ENCODE measurements at regions of chr4 and their contacts with region 1.

Region 1: GRCh38 chr4:119041951-119042560 is 93.6 kb upstream of the MYOZ2 start:
- DNase-seq: no peak
- H3K4me3 ChIP-seq: no peak overlapping the region
- CTCF ChIP-seq: peak; percentile 52

Region 2: GRCh38 chr4:118888666-118889311 is 153.3 kb before region 1 on chr4 and contains the start of gene SYNPO2:
- CTCF ChIA-PET with region 1: no interaction called
- POLR2A ChIA-PET with region 1: no interaction called
- DNase-seq: no peak
- H3K4me3 ChIP-seq: peak within 1 kb of the TSS; percentile 74
- CTCF ChIP-seq: no peak

Region 3: DNA sequence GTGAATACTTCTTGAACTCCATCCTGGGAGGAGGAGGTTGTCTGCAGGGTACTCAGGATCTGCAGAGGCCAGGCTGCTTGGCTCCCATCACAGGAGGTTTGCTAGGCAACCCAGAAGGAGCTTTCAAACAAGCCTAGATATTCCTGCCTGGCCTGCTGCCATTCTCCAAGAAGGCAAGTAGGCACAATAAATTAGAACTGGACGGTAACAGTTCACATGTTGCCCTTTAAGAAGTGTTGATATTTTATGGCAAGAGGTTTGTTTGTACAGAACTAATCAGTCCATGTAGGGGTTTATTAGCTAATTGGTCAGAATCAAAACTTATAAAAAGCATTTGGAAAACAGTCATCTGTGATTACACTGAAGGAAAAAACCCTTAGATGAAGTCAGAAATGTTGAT is 114.1 kb before region 1 on chr4:
- CTCF ChIA-PET with region 1: no interaction called
- POLR2A ChIA-PET with region 1: no interaction called
- DNase-seq: no peak
- H3K4me3 ChIP-seq: no peak overlapping the region
- CTCF ChIP-seq: no peak

Region 4: DNA sequence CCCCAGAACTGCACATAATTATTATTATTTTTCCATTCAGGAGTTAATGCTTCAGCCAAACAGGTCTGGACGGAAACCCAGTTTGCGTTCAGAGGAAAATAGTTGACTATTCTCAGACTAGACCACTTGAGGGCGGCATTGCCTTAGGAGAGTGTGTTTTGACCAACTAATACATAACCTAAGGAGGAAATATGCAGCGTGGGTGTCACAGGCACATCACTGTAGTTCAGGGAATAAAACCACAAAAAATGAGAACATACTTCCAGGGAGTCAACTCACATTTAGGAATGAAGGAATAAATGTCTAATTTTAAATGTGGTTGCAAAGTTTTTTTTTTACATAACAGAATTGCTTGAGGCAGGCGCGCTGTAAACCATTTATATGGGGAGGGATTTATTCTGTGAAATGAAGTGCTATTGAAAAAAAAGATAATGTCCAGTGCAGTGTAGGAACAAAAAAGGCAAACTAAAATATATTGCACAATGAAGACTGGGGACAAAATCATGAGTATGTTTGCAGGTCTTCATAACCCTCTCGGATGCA is 60.1 kb before region 1 on chr4:
- CTCF ChIA-PET with region 1: interaction called, 125 read pairs
- POLR2A ChIA-PET with region 1: interaction called, 5 read pairs
- DNase-seq: peak; percentile 96
- H3K4me3 ChIP-seq: no peak overlapping the region
- CTCF ChIP-seq: peak; percentile 59

Region 5: DNA sequence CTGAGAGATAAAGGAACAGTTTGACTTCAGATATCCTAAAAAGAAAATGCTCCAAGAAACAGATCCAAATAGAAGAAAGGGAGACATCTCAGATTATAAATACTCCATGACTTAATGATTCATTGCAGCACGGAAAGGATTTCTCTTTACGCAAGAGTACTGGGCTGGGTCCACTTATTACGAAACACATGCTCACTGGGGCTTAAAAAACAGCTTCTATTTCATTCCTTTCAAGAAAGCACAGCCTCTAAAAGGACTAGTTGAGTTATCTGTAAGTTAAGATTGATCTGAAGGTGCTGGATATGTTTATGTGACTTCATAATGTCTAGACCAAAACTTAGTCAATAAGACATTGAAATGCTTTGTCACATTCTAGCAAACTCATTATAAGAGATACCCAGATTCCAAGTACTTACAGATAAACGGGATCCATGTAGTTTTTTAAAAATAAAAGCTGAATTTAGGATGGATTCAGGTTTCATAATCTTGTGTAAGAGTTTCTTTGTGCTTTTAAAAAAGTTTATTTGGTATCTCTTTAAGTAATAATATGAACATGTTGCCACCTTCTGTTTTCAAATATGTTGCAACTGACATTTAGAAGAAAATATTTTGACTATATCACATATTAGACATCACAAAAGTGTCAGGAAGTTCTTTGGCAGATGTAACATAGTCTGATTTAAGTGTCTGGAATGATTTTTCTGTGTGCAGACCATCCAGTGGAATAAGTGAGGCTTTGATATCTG is 16.0 kb before region 1 on chr4:
- CTCF ChIA-PET with region 1: interaction called, 14 read pairs
- POLR2A ChIA-PET with region 1: interaction called, 6 read pairs
- DNase-seq: peak; percentile 88
- H3K4me3 ChIP-seq: peak overlapping the region; percentile 68
- CTCF ChIP-seq: no peak

Region 6: DNA sequence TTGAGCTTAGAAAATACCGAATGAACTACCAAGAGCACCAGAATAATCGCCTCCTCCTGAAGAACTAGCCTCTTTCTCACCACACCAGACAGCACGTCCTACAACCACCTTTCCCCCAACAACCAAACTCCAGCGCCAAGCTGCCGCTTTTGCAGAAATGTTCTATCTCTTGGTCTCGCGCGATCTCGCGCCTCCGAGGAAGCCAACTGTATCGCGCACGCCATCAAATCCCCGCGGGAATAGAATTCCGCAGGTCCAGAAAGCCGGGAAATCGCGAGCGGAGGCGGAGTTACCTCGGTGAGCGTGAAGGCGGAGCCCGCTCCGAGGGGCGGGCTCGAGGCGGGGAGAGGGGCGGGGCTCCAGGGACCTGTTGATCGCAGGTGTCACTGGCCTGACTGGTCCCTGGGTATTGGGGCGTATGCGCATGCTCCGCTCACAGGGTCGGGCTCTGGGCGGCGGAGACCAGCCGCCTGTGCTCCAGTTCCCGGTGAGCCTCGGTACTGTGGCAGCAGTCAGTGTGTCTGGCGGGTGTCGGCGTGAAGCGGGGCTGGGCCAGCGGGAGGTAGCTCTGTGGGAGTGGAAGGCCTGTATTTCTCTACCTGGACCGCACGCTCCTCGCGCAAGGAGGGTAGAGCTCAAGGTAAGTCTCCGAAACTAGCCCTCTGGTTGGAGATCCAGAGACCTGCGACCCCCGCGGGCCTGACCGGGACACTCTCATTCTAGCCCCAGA is 170.3 kb after region 1 on chr4 and contains the start of gene USP53:
- CTCF ChIA-PET with region 1: interaction called, 27 read pairs
- POLR2A ChIA-PET with region 1: interaction called, 12 read pairs
- DNase-seq: peak; percentile 82
- H3K4me3 ChIP-seq: peak within 1 kb of the TSS; percentile 91
- CTCF ChIP-seq: no peak

Region 7: DNA sequence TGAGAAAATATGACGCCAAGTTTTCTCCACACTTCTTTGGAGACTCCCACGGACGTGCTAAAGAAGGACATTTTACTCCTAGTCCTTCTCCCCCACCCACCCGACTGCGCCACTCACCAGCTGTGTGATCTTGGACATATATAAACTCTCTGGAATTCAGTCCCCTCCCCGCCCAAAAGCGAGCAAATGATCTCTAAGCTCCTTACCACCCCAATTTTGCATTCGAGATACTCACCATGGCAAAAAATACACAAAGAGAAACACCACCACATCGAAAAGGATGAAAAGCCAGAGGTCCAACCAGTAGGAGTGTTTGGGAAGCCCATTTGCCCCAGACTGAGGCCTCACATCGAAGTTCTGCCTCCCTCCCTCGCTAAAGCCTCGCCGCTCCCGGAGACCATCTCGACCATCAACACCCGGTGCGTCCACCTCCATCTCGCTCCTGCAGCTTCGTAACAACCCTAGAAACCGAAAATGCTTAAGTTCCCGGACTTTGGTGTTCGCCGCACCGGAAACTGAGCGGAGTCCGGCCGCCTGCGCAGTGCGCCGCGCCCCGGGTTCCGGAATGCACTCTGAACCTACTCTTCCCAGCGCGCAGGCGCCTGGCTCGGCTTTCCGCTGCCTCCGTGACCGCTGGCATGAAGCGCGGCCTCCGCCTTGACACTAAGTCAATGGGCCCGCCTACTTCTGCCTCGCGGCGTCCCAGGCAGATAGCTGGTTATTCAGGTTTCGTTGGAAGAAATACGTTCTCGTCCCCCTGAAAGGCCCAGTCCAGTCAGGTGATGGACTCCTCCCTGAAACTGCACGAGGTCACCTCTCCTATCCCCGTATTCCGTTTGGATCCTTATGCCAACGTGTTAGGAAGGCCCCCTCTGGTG is 258.3 kb after region 1 on chr4:
- CTCF ChIA-PET with region 1: interaction called, 49 read pairs
- POLR2A ChIA-PET with region 1: interaction called, 19 read pairs
- DNase-seq: peak; percentile 63
- H3K4me3 ChIP-seq: peak overlapping the region; percentile 89
- CTCF ChIP-seq: no peak

Region 8: GRCh38 chr4:119478446-119479179 is 436.6 kb after region 1 on chr4:
- CTCF ChIA-PET with region 1: no interaction called
- POLR2A ChIA-PET with region 1: no interaction called
- DNase-seq: no peak
- H3K4me3 ChIP-seq: no peak overlapping the region
- CTCF ChIP-seq: no peak

Measured in AG04449 (cell line).